Panc1 (cell line): ENCODE measurements at regions of chr11 and their contacts with region 1.

Region 1: DNA sequence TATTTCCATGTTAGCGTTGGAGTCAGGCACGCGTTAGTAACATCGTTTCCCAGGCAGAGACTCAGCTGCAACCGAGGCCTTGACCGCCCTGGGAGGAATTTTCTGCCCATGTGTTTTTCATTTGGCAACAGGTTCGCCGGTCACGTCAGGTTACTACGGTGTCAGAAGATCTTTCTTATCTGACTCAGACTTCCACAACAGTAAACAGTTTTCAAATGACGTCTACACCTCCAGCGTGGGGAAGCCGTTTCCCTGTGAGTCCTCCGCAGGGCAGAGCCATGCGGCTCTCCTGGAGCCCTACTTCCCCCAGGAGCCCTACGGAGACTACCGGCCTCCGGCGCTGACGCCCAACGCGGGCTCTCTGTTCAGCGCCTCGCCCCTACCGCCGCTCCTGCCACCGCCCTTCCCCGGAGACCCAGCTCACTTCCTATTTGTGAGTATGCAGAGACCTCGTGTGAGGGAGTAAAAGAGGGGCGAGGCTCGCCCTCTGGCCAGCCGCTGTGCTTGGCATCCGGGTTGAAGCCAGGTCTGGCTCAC is 14.3 kb upstream of the POU2AF3 start:
- DNase-seq: no peak
- ATAC-seq: no peak
- H3K4me3 ChIP-seq: no peak overlapping the region
- H3K27ac ChIP-seq: no peak overlapping the region
- H3K4me1 ChIP-seq: no peaks in the 10 kb centered on the region
- H3K27me3 ChIP-seq: peaks cover 12% of the 10 kb centered on the region
- CTCF ChIP-seq: no peak

Region 2: DNA sequence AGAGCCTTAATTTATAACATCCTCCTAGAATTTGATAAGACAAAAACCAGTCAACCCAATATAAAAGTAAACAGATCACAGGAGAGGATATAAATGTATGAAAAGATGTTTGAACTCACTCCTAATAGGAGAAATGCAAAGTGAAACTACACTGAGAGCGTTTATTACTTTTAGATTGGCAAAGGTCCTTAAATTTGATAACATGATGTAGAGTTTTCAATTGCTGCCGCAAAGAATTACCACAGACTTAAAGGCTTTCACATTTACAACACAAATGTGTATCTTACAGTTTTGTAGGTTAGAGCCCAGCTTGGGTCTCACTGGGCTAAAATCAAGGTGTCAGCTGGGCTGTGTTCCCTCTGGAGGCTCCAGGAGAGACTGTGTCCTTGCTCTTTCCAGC is 47.6 kb before region 1 on chr11:
- CTCF ChIA-PET with region 1: no interaction called
- POLR2A ChIA-PET with region 1: no interaction called
- in situ Hi-C with region 1: no loop called
- intact Hi-C with region 1: no loop called
- DNase-seq: no peak
- ATAC-seq: peak; percentile 62; the same call in 1 of the 2 replicates
- H3K4me3 ChIP-seq: peak overlapping the region in 1 of 2 experiments; percentile 26; a peak in 2 of 4 replicates
- H3K27ac ChIP-seq: no peak overlapping the region
- H3K4me1 ChIP-seq: no peaks in the 10 kb centered on the region
- H3K27me3 ChIP-seq: peaks cover 20% of the 10 kb centered on the region
- CTCF ChIP-seq: no peak

Region 3: GRCh38 chr11:111422494-111423249 is 138.7 kb after region 1 on chr11:
- CTCF ChIA-PET with region 1: interaction called, 4 read pairs
- POLR2A ChIA-PET with region 1: no interaction called
- in situ Hi-C with region 1: no loop called
- intact Hi-C with region 1: loop called (anchors 2 kb)
- DNase-seq: no peak
- ATAC-seq: peak; percentile 81
- H3K4me3 ChIP-seq: no peak overlapping the region
- H3K27ac ChIP-seq: no peak overlapping the region
- H3K4me1 ChIP-seq: peaks cover under 1% of the 10 kb centered on the region; the same call in 1 of the 2 replicates
- H3K27me3 ChIP-seq: 0 out of 2 replicates have a peak, but pooled peaks cover 2% of the 10 kb centered on the region
- CTCF ChIP-seq: peak; percentile 88

Region 4: GRCh38 chr11:111429066-111429506 is 145.1 kb after region 1 on chr11:
- CTCF ChIA-PET with region 1: interaction called, 11 read pairs
- POLR2A ChIA-PET with region 1: no interaction called
- in situ Hi-C with region 1: no loop called
- intact Hi-C with region 1: no loop called
- DNase-seq: no peak
- ATAC-seq: peak; percentile 66
- H3K4me3 ChIP-seq: no peak overlapping the region
- H3K27ac ChIP-seq: no peak overlapping the region
- H3K4me1 ChIP-seq: no peaks in the 10 kb centered on the region
- H3K27me3 ChIP-seq: peaks cover 18% of the 10 kb centered on the region
- CTCF ChIP-seq: peak; percentile 89

Region 5: DNA sequence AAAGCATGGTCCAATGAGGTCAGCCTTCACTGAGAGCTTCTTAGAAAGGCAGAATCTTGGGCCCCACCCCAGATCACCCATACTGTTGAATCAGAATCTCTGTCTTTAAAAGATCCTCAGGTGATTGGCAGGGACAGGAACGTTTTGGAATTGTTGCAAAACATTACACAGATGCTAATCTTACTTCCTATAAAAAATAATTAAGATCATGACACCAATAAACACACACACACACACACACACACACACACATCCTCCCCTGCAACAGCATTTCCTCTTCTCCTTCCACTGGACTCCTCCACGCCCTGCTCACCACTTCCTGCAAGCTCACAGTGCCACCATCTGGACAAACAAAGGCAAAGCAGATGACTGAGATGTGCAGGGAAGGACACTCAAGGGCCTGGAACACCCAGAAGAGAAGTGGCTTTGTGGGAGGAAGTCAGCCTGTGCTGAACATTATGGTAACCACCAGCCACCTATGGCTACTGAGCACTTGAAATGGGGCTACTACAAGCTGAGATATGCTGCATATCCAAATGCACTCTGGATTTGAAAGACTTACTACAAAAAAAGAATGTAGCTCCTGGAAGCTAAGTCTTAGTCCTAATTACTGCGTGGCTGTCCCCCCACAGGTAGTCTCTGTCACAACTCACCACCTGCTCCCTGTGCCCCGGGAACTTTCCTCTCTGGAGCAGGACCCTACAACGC is 162.5 kb after region 1 on chr11:
- CTCF ChIA-PET with region 1: interaction called, 15 read pairs
- POLR2A ChIA-PET with region 1: no interaction called
- in situ Hi-C with region 1: no loop called
- intact Hi-C with region 1: loop called (anchors 1 kb)
- DNase-seq: peak; percentile 77
- ATAC-seq: peak; percentile 97
- H3K4me3 ChIP-seq: no peak overlapping the region
- H3K27ac ChIP-seq: no peak overlapping the region
- H3K4me1 ChIP-seq: no peaks in the 10 kb centered on the region
- H3K27me3 ChIP-seq: 0 out of 2 replicates have a peak, but pooled peaks cover 3% of the 10 kb centered on the region
- CTCF ChIP-seq: peak; percentile 93